Mammary epithelial cell (primary cell): ENCODE measurements at regions of chr4 and their contacts with region 1.

Region 1: GRCh38 chr4:104615926-104616325 is 121.2 kb upstream of the CXXC4 start:
- DNase-seq: no peak
- H3K4me3 ChIP-seq: no peak overlapping the region
- H3K27ac ChIP-seq: no peak overlapping the region
- H3K4me1 ChIP-seq: peaks cover 7% of the 10 kb centered on the region
- H3K27me3 ChIP-seq: no peaks in the 10 kb centered on the region
- CTCF ChIP-seq: no peak

Region 2: DNA sequence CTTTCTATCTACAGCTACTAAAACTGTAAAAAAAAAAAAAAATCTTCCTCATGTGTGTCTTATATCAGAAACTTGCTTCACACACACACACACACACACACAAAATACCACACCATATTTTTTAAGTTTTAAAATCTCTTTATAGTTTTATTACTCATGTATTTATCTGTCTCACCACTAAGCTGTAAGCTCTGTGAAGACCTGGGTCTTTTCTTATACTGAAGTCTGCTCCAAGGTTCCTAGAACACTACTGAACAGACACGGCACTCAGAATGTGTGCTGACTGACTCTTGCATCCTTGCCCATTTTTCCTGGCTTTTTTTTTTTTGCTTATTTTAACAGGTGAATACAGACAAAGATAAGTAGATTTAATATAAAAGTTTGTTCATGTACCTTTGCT is 14.3 kb after region 1 on chr4:
- CTCF ChIA-PET with region 1: interaction called, 12 read pairs
- dilution Hi-C with region 1: no loop called
- in situ Hi-C with region 1: no loop called
- intact Hi-C with region 1: no loop called
- DNase-seq: no peak
- H3K4me3 ChIP-seq: no peak overlapping the region
- H3K27ac ChIP-seq: no peak overlapping the region
- H3K4me1 ChIP-seq: no peaks in the 10 kb centered on the region
- H3K27me3 ChIP-seq: no peaks in the 10 kb centered on the region
- CTCF ChIP-seq: no peak